HEK293 (cell line): ENCODE measurements at regions of chr9 and their contacts with region 1.

Region 1: DNA sequence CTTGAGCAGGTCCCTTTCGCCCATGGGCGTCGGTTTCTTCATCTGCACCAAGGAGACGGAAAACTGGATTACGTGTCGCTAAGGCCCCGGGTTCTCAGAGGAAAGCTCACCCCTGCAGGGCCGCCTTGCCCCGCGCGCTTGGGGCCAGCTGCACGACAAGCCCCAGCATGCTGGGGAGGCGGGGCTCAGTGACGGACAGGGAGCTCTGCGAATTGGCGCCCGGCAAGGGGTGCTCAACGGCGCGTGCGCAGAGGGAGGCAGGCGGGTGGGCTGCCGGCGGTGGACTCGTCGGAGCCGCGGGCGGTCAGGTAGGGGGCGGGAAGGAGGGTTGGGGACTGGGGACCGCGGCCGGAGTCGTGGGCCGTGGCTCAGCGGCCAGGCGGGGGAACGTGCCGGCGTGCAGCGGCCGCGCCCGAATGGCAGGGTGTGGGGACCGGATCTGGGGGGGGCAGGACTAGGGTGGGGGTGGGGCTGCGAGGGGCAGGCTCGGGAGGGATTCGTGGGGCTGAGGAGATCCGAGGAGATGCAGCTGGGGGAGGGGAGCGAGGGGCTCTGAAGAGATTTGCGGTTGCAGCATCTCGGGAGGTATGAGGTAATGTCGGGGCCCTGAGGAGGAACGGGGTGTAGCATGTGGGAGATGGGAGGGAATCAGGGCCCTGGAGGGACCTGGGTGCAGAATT is at the start of gene TRIM32:
- H3K4me3 ChIP-seq: peak within 1 kb of the TSS; percentile 82
- H3K27ac ChIP-seq: peak within 1 kb of the TSS; percentile 46; the same call in 1 of the 2 replicates
- H3K4me1 ChIP-seq: peaks cover 2% of the 10 kb centered on the region; the same call in 1 of the 2 replicates
- CTCF ChIP-seq: no peak

Region 2: GRCh38 chr9:116697362-116697761 is 10.1 kb after region 1 on chr9:
- CTCF ChIA-PET with region 1: interaction called, 4 read pairs
- POLR2A ChIA-PET with region 1: interaction called, 11 read pairs
- H3K4me3 ChIP-seq: no peak overlapping the region
- H3K27ac ChIP-seq: no peak overlapping the region
- H3K4me1 ChIP-seq: no peaks in the 10 kb centered on the region
- CTCF ChIP-seq: no peak